A549 (cell line): ENCODE measurements at regions of chr1 and their contacts with region 1.

Region 1: DNA sequence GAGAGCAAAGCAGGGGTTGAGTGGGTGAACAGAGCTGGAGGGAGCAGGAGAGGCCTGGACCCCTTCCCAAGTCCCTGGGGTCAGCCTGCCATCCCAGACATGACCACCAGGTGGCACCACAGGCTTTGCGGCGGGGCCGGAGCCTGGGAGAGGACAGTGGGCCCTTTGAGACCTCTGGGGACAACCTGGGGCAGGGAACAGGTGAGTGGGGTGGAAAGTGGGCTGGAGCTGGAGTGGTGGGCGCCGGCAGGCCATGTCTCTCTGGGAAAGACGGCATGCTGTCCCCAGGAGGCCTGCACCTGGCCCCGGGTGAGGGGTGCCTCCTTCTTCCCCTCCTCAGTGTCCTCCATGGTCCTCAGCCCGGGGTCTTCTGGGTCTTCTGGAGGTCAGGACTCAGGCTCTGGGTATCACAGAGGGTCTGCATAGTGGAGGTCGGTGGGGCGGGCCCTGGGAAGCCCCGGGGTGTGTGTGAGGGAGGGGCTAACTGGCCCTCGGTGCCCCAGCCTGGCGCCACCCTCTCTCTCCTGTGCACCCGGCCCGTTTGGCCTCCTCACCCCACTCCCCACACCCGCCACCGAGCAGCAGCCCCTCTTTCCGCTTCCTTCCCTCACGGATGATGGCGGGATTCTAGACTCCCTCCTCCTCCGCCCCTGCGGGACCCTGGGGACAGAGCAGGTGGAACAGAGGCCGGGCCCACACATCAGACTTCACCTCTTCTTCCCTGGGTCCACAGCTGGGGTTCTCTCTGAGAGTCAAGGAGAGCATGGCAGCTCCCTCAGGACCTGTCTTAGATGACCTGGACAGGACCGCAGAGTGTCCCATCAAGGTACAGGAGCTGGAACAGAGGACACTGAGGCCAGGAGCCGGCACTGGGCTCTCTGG is 28.4 kb upstream of the PKP1 start:
- DNase-seq: peak; percentile 47 to 89
- ATAC-seq: peak; percentile 78 to 95
- H3K4me3 ChIP-seq: no peak overlapping the region
- H3K27ac ChIP-seq: peak overlapping the region; percentile 63 to 64; a peak in 5 of 6 replicates
- H3K4me1 ChIP-seq: 0 out of 3 replicates have a peak, but pooled peaks cover 3% of the 10 kb centered on the region
- CTCF ChIP-seq: peak; percentile 98
- EP300 ChIP-seq: no peak
- POLR2A ChIP-seq: no peak
- RAD21 ChIP-seq: peak; percentile 99 to 100

Region 2: GRCh38 chr1:201149400-201149799 is 105.5 kb before region 1 on chr1:
- CTCF ChIA-PET with region 1: interaction called, 12 read pairs
- POLR2A ChIA-PET with region 1: no interaction called
- DNase-seq: peak; percentile 64 to 85
- ATAC-seq: peak; percentile 54 to 65; a peak in 5 of 6 replicates
- H3K4me3 ChIP-seq: no peak overlapping the region
- H3K27ac ChIP-seq: no peak overlapping the region
- H3K4me1 ChIP-seq: peaks cover 7% of the 10 kb centered on the region
- CTCF ChIP-seq: peak; percentile 78
- EP300 ChIP-seq: no peak
- POLR2A ChIP-seq: no peak
- RAD21 ChIP-seq: peak; percentile 49 to 61

Region 3: GRCh38 chr1:201184307-201185122 is 70.4 kb before region 1 on chr1:
- CTCF ChIA-PET with region 1: no interaction called
- POLR2A ChIA-PET with region 1: no interaction called
- DNase-seq: peak; percentile 29 to 54
- ATAC-seq: peak; percentile 87 to 95
- H3K4me3 ChIP-seq: no peak overlapping the region
- H3K27ac ChIP-seq: peak overlapping the region in 1 of 2 experiments; percentile 33; a peak in 2 of 6 replicates
- H3K4me1 ChIP-seq: 0 out of 3 replicates have a peak, but pooled peaks cover 5% of the 10 kb centered on the region
- CTCF ChIP-seq: peak; percentile 24; the same call in 2 of the 3 replicates
- EP300 ChIP-seq: no peak
- POLR2A ChIP-seq: no peak
- RAD21 ChIP-seq: peak; percentile 22 to 39; a peak in 2 of 5 replicates

Region 4: GRCh38 chr1:201217146-201217545 is 37.7 kb before region 1 on chr1:
- CTCF ChIA-PET with region 1: no interaction called
- POLR2A ChIA-PET with region 1: no interaction called
- DNase-seq: no peak
- ATAC-seq: no peak
- H3K4me3 ChIP-seq: no peak overlapping the region
- H3K27ac ChIP-seq: no peak overlapping the region
- H3K4me1 ChIP-seq: no peaks in the 10 kb centered on the region
- CTCF ChIP-seq: no peak
- EP300 ChIP-seq: no peak
- POLR2A ChIP-seq: no peak
- RAD21 ChIP-seq: no peak

Region 5: DNA sequence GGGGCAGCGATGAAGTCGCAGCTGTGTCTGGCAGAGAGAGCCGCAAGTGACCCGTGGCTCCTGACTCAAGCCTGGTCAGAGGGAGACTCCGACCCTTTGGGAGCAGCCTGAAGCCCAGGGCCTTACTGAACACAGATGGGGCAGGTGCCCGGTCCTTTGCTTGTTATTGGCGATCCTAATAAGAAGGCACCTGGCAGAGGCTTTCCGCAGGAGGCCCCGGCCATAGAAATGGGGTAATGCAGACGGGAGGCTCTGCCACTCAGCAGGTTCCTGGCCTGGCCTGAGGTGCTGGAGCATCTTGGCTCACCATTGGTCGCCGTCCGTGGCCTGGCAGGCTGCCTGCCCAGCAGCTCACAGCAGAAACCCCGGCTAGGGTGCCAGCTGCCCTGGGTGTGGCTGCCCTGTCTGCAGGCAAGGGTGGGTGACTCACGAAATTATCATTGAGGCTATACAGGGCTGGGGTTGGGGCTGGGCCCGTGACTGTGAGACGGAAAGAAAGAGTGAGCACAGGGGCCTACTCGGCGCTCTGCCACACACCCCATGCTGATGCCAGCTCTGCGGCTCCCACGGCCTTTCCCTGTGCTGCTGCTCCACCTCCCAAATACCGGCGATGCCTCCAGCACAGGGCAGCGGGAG is 20.3 kb after region 1 on chr1:
- CTCF ChIA-PET with region 1: interaction called, 79 read pairs
- POLR2A ChIA-PET with region 1: no interaction called
- DNase-seq: peak; percentile 91 to 94
- ATAC-seq: peak; percentile 93 to 95
- H3K4me3 ChIP-seq: no peak overlapping the region
- H3K27ac ChIP-seq: peak overlapping the region; percentile 87
- H3K4me1 ChIP-seq: peaks cover 40% of the 10 kb centered on the region
- CTCF ChIP-seq: no peak
- EP300 ChIP-seq: peak in 1 of 2 experiments; percentile 53; a peak in 1 of 5 replicates
- POLR2A ChIP-seq: no peak
- RAD21 ChIP-seq: peak; percentile 11 to 25; a peak in 1 of 5 replicates

Region 6: GRCh38 chr1:201295861-201296260 is 41.0 kb after region 1 on chr1:
- CTCF ChIA-PET with region 1: interaction called, 21 read pairs
- POLR2A ChIA-PET with region 1: no interaction called
- DNase-seq: peak; percentile 48 to 64
- ATAC-seq: peak; percentile 48 to 76; a peak in 3 of 6 replicates
- H3K4me3 ChIP-seq: no peak overlapping the region
- H3K27ac ChIP-seq: peak overlapping the region; percentile 30 to 73
- H3K4me1 ChIP-seq: peaks cover 39% of the 10 kb centered on the region
- CTCF ChIP-seq: no peak
- EP300 ChIP-seq: no peak
- POLR2A ChIP-seq: no peak; the same call in 1 of the 2 replicates
- RAD21 ChIP-seq: no peak

Region 7: GRCh38 chr1:201329286-201329685 is 74.4 kb after region 1 on chr1:
- CTCF ChIA-PET with region 1: interaction called, 21 read pairs
- POLR2A ChIA-PET with region 1: no interaction called
- DNase-seq: no peak
- ATAC-seq: no peak
- H3K4me3 ChIP-seq: no peak overlapping the region
- H3K27ac ChIP-seq: no peak overlapping the region
- H3K4me1 ChIP-seq: no peaks in the 10 kb centered on the region
- CTCF ChIP-seq: no peak
- EP300 ChIP-seq: no peak
- POLR2A ChIP-seq: no peak
- RAD21 ChIP-seq: no peak

Region 8: DNA sequence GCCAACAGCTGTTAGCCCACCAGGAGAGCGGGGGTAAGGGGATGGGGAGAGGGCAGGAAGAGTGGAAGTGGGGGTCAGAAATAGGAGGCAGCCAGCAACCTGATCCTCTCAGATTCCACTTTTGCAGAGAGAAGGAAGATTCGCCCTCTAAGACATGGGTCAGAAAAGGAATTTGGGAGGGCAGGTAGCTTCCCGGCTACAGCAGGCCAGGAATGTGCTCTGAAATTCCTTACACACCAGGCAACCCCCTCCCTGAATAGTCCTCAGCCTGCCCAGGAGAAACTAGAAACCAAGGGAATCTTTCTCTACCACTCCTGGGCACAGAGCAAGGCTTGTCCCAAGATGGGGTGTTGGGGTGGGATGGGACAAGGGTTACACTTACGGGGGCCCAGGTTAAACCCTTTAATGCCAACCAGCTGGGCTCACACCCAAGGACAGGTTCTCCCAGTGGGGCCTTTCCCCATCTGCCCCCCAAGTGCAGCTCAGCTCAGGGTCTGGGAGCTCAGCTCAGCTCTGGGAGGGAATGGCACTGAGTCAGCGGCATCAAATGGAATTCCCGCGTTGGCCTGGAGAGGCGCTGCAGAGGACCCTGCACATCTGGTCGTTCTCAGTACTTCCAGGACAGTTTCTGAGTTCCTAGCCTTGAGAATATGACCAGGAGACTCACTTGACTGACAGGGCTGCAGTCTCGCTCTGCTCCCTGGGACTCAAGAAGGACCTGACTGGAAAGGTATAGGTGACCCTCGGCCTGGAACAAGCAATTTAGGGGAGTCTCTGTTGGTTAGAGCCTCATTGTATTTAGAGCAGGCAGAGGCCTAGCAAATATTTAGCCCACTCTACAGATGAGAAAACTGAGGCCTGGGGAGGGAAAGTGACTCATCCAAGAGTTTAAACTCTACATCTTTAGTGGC is 121.9 kb after region 1 on chr1:
- CTCF ChIA-PET with region 1: interaction called, 48 read pairs
- POLR2A ChIA-PET with region 1: no interaction called
- DNase-seq: peak; percentile 47 to 77
- ATAC-seq: peak; percentile 57 to 88; a peak in 3 of 6 replicates
- H3K4me3 ChIP-seq: no peak overlapping the region
- H3K27ac ChIP-seq: 0 out of 6 replicates have a peak overlapping the region, but pooled peaks of 1 of the 2 experiments have one; percentile 11
- H3K4me1 ChIP-seq: no peaks in the 10 kb centered on the region
- CTCF ChIP-seq: peak; percentile 32
- EP300 ChIP-seq: no peak
- POLR2A ChIP-seq: no peak
- RAD21 ChIP-seq: no peak